ENCODE measurements at regions of chr16 and their contacts with region 1.

Region 1: DNA sequence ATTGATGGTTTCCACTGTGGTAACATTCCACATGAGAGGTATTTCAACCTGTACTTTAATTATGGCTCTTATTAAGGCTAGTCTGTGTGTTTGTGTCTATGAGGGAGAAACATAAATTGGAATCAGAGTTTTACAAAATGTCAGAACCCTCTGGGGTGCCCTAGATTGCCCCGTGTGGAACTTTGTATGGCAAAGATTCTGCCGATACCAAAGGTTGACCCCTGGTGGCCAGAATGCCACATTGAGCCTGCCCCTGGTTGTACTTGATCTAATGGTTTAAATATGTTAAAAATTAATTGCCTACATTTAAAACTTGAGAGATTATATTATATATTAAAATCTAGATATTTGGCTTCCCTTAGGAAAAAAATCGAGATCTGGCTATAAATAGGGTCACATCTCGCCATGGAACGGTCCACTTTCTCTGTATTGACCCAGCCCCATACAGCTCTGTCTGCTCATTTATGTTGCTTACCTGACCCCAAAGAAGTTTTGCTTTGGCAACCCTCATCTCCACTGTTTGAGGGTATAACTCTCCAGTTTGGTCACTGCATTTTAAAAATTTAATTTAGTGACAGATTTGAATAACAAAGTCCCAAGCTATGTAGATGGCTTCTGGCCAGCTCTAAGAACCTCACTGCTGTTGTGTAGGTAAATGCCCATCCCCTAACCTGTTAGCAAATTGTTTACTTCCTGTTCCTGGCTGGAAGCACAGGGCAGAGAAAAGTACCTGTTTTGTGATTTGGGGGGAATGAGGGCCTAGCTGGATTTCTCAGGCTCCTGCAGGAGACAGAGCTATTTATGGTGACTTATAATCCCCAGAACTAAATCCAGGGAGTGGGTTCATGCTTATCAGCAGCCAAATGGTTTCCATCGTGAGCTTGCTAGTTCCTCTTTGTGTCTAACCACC is 95.0 kb downstream of the PLCG2 start:
- DNase-seq: no peak
- H3K4me3 ChIP-seq: no peak overlapping the region
- H3K27ac ChIP-seq: no peak overlapping the region
- H3K27me3 ChIP-seq: no peaks in the 10 kb centered on the region
- CTCF ChIP-seq: peak; percentile 76

Region 2: GRCh38 chr16:81888495-81889410 is 14.7 kb after region 1 on chr16:
- CTCF ChIA-PET with region 1: interaction called, 10 read pairs
- POLR2A ChIA-PET with region 1: no interaction called
- DNase-seq: no peak
- H3K4me3 ChIP-seq: no peak overlapping the region
- H3K27ac ChIP-seq: no peak overlapping the region
- H3K27me3 ChIP-seq: peaks cover 4% of the 10 kb centered on the region
- CTCF ChIP-seq: no peak